Thyroid gland (tissue), 4 donors: ENCODE measurements at regions of chr5 and their contacts with region 1.

Region 1: DNA sequence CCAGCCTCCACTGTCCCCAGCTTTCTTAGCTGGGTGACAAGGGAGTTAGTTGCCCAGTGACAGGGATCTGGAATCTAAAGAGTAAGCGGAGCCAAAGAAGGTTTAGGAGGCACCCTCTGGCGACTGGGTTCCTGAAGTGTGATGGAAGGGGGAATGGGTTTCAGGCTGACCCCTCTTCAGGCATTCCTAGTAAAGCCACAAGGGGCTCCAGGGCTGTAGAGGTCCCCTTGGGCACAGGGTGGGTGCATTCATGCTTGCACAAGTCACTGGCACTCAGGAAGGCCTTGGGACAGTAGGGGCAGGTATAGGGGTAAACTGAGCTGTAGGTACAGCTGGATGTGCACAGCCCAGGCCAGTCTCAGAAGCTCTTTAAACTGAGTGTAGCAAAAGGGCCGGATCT is 74.2 kb downstream of the CPLANE1 start:
- DNase-seq: no peak
- H3K4me3 ChIP-seq: no peak overlapping the region
- H3K27ac ChIP-seq: no peak overlapping the region
- H3K4me1 ChIP-seq: no peaks in the 10 kb centered on the region
- H3K27me3 ChIP-seq: no peaks in the 10 kb centered on the region
- CTCF ChIP-seq: no peak
- POLR2A ChIP-seq: no peak

Region 2: GRCh38 chr5:37222176-37222575 is 47.2 kb after region 1 on chr5:
- intact Hi-C with region 1: loop called (anchors 10 kb)
- DNase-seq: no peak
- H3K4me3 ChIP-seq: no peak overlapping the region
- H3K27ac ChIP-seq: no peak overlapping the region
- H3K4me1 ChIP-seq: no peaks in the 10 kb centered on the region
- H3K27me3 ChIP-seq: no peaks in the 10 kb centered on the region
- CTCF ChIP-seq: no peak
- POLR2A ChIP-seq: no peak